ENCODE measurements at regions of chr9 and their contacts with region 1.

Region 1: GRCh38 chr9:107465467-107466451 is 23.8 kb downstream of the KLF4 start:
- DNase-seq: peak; percentile 65 to 87 (median 72)
- ATAC-seq: peak; percentile 88 to 99 (median 98)
- H3K4me3 ChIP-seq: peak overlapping the region; percentile 38 to 83 (median 70)
- H3K27ac ChIP-seq: peak overlapping the region in 5 of 12 donors; percentile 51 to 69 (median 58)
- H3K4me1 ChIP-seq: peaks cover 0 to 15% (median 4%) of the 10 kb centered on the region in 12 donors
- H3K27me3 ChIP-seq: no peaks in the 10 kb centered on the region
- CTCF ChIP-seq: peak; percentile 84 to 97 (median 90)
- POLR2A ChIP-seq: no peak

Region 2: DNA sequence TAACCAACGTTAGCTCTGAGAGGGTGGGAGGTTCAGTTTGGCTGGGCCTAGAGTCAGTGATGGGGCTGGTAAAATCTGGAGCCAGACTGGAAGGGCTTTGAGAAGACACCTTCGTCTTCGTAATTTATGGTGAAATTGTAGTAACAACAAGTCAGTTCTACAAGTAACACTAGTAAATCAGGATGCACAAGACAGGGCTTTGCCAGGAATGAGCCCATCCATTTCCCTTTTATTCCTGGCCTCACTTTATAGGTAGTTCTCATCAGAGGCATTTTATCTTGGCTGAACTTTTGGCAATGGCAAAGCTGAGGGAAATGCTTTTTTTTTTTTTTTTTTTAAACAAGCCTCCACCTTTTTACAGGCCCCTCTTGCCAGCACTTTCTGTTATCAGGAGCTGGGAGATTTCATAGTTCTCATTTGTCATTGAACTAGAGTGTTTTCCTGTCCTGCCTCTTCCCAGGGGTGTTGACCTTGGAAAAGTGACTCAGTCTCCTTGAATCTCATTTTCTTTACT is 134.4 kb after region 1 on chr9:
- intact Hi-C with region 1: no loop called
- DNase-seq: peak in 3 of 5 donors; percentile 21 to 57 (median 27)
- ATAC-seq: peak; percentile 83 to 96 (median 88)
- H3K4me3 ChIP-seq: no peak overlapping the region
- H3K27ac ChIP-seq: peak overlapping the region; percentile 35 to 71 (median 65)
- H3K4me1 ChIP-seq: peaks cover 0 to 20% (median 11%) of the 10 kb centered on the region in 12 donors
- H3K27me3 ChIP-seq: no peaks in the 10 kb centered on the region
- CTCF ChIP-seq: no peak
- POLR2A ChIP-seq: no peak

Region 3: DNA sequence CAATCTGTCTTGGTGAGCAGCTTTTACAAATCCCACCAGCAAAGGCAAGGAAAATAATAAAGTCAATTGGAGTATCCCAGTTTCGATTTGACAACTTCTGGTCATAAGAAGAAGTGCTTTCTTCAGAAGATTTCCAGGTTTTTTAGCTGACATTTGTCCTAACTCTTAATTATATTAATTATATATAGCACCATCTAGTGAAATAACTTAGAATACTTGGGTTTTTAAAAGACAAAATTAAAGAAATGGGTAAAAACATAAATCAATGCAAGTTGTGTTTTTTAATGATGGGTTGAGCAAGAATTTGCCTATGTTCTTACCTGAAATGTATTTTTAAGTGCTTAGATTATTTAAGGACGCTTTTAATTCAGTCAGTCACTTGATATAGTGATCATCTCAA is 968.3 kb after region 1 on chr9:
- intact Hi-C with region 1: loop called in 3 of 10 experiments (anchors 5 to 10 kb)
- DNase-seq: no peak
- ATAC-seq: no peak
- H3K4me3 ChIP-seq: no peak overlapping the region
- H3K27ac ChIP-seq: no peak overlapping the region
- H3K4me1 ChIP-seq: no peaks in the 10 kb centered on the region
- H3K27me3 ChIP-seq: no peaks in the 10 kb centered on the region
- CTCF ChIP-seq: peak in 4 of 12 donors; percentile 16 to 22 (median 20)
- POLR2A ChIP-seq: no peak

Region 4: DNA sequence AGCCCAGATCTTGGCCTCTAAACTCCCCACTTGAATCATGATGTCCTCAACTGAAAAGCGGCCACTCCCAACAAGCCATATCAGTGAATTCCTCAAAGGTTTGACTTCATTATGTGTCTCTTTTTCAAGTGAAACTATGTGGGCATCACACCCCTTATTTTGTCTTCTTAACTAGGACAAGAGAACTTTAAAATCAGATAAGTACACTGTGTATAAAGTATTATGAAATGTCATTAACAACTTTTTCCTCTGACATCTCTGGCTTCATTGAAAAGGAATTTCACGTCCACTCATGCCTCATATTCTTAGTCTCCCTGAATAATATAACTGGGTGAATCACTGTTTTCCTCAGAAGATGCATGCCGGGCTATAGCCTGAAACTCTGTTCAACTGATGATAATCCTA is 974.2 kb after region 1 on chr9:
- intact Hi-C with region 1: loop called in 2 of 10 experiments (anchors 10 kb)
- DNase-seq: no peak
- ATAC-seq: no peak
- H3K4me3 ChIP-seq: no peak overlapping the region
- H3K27ac ChIP-seq: no peak overlapping the region
- H3K4me1 ChIP-seq: no peaks in the 10 kb centered on the region
- H3K27me3 ChIP-seq: no peaks in the 10 kb centered on the region
- CTCF ChIP-seq: no peak
- POLR2A ChIP-seq: no peak